ENCODE measurements at regions of chr7 and their contacts with region 1.

Region 1: GRCh38 chr7:36366718-36367560 is 22.7 kb upstream of the ANLN start:
- DNase-seq: peak; percentile 84 to 97 (median 89)
- ATAC-seq: peak; percentile 96
- H3K4me3 ChIP-seq: peak overlapping the region; percentile 56
- H3K4me3 Mint-ChIP-seq: peak overlapping the region; percentile 92
- H3K27ac ChIP-seq: peak overlapping the region in 1 of 2 donors; percentile 40
- H3K27ac Mint-ChIP-seq: peak overlapping the region; percentile 64
- H3K4me1 ChIP-seq: peaks cover 6% of the 10 kb centered on the region
- H3K4me1 Mint-ChIP-seq: peaks cover 6% of the 10 kb centered on the region
- H3K27me3 ChIP-seq: no peaks in the 10 kb centered on the region
- H3K27me3 Mint-ChIP-seq: no peaks in the 10 kb centered on the region
- CTCF ChIP-seq: peak; percentile 96

Region 2: GRCh38 chr7:36379831-36380504 is 13.0 kb after region 1 on chr7:
- CTCF ChIA-PET with region 1: interaction called, 13 read pairs
- POLR2A ChIA-PET with region 1: interaction called, 3 read pairs
- intact Hi-C with region 1: no loop called
- DNase-seq: no peak
- ATAC-seq: no peak
- H3K4me3 ChIP-seq: no peak overlapping the region
- H3K4me3 Mint-ChIP-seq: no peak overlapping the region
- H3K27ac ChIP-seq: no peak overlapping the region
- H3K27ac Mint-ChIP-seq: no peak overlapping the region
- H3K4me1 ChIP-seq: peaks cover 9% of the 10 kb centered on the region
- H3K4me1 Mint-ChIP-seq: peaks cover 20% of the 10 kb centered on the region
- H3K27me3 ChIP-seq: no peaks in the 10 kb centered on the region
- H3K27me3 Mint-ChIP-seq: no peaks in the 10 kb centered on the region
- CTCF ChIP-seq: no peak

Region 3: DNA sequence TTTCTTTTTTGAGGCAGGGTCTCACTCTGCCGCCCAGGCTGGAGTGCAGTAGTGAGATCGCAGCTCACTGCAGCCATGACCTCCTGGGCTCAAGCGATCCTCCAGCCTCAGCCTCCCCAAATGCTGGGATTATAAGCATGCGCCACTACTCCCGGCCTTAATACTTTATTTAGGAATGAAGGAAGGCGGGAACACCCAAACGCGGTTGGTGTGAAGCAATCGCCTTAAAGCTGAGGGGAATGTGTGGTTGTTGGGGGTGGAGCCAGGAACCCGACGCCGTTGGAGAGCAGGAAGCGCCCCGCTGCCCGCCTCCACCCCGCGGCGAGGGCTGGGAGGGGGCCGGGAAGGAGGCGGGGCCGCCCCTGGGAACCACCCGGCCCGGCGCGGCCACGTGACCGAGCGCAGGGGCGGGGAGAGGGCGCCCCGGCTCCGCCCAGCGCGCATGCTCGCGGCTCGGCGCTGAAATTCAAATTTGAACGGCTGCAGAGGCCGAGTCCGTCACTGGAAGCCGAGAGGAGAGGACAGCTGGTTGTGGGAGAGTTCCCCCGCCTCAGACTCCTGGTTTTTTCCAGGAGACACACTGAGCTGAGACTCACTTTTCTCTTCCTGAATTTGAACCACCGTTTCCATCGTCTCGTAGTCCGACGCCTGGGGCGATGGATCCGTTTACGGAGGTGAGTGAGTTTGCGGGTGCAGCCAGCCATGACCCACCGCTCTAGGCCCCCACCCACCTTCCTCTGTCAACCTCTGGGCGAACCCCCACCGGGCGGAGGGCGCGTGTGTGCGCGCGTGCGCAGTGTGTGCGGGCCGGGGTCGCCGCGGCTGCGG is 22.6 kb after region 1 on chr7 and contains the start of gene ANLN:
- CTCF ChIA-PET with region 1: interaction called, 13 read pairs
- POLR2A ChIA-PET with region 1: interaction called, 7 read pairs
- intact Hi-C with region 1: loop called (anchors 1 to 2 kb)
- DNase-seq: peak; percentile 68 to 94 (median 80)
- ATAC-seq: peak; percentile 93
- H3K4me3 ChIP-seq: peak within 1 kb of the TSS; percentile 82
- H3K4me3 Mint-ChIP-seq: peak within 1 kb of the TSS; percentile 88
- H3K27ac ChIP-seq: peak within 1 kb of the TSS; percentile 37 to 77
- H3K27ac Mint-ChIP-seq: peak within 1 kb of the TSS; percentile 49
- H3K4me1 ChIP-seq: peaks cover 11% of the 10 kb centered on the region
- H3K4me1 Mint-ChIP-seq: peaks cover 24% of the 10 kb centered on the region
- H3K27me3 ChIP-seq: no peaks in the 10 kb centered on the region
- H3K27me3 Mint-ChIP-seq: peaks cover 4% of the 10 kb centered on the region
- CTCF ChIP-seq: no peak
- total RNA-seq, gene ANLN: 0.33 to 1.1 TPM